IMR-90 (cell line): ENCODE measurements at regions of chr2 and their contacts with region 1.

Region 1: DNA sequence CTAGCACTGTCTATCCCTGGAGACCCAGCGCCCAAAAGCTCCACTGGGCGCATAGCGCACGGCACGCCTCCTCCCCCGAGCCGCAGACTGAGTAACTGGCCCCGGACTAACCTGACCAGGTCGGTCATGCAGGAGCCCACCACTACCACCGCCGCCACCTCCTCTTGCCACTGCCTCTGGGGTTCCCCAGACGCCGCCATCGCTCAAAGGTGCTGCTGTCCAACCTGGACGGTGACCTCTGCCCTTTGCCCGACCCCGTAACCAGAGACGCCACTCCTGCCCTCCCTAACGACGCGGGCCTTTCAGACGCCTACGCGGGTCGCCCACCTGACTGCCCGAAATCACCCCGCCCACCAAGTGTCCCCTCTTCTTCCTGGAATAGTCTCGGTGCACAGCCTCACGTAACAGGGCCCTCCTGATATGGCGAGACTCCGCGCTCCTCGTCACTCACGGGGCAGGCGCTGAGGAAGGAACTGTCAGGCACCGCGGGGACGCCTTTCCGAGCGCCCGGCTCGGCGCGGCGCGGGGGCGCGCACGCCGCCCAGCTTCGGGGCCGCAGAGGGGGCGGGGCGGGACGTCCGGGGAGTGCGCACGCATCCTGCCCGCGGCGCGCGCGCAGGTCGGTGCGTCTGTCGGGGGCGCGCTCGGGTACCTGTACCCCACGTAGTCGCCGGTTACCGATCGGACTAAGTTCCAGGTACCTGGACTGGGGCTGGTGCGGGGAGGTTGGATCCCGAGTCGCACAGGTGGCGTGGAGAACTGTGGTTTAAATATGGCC is at the starts of genes BABAM2 and RBKS:
- DNase-seq: peak; percentile 78
- ATAC-seq: peak; percentile 93
- H3K4me3 ChIP-seq: peak within 1 kb of the TSS; percentile 85
- H3K27ac ChIP-seq: peak within 1 kb of the TSS; percentile 98
- H3K4me1 ChIP-seq: peaks cover 3% of the 10 kb centered on the region; the same call in 1 of the 2 replicates
- H3K27me3 ChIP-seq: no peaks in the 10 kb centered on the region
- CTCF ChIP-seq: no peak
- POLR2A ChIP-seq: peak; percentile 59; the same call in 1 of the 2 replicates
- RAD21 ChIP-seq: peak; percentile 34
- total RNA-seq, gene BABAM2: 16.7 and 23.1 TPM in 2 replicates
- total RNA-seq, gene RBKS: 0.83 and 1.1 TPM in 2 replicates

Region 2: GRCh38 chr2:27271631-27272340 is 618.5 kb before region 1 on chr2:
- CTCF ChIA-PET with region 1: no interaction called
- POLR2A ChIA-PET with region 1: no interaction called
- dilution Hi-C with region 1: no loop called
- in situ Hi-C with region 1: no loop called
- intact Hi-C with region 1: no loop called
- DNase-seq: no peak
- ATAC-seq: no peak
- H3K4me3 ChIP-seq: no peak overlapping the region
- H3K27ac ChIP-seq: no peak overlapping the region
- H3K4me1 ChIP-seq: no peaks in the 10 kb centered on the region
- H3K27me3 ChIP-seq: peaks cover 48% of the 10 kb centered on the region
- CTCF ChIP-seq: no peak
- POLR2A ChIP-seq: no peak
- RAD21 ChIP-seq: no peak

Region 3: DNA sequence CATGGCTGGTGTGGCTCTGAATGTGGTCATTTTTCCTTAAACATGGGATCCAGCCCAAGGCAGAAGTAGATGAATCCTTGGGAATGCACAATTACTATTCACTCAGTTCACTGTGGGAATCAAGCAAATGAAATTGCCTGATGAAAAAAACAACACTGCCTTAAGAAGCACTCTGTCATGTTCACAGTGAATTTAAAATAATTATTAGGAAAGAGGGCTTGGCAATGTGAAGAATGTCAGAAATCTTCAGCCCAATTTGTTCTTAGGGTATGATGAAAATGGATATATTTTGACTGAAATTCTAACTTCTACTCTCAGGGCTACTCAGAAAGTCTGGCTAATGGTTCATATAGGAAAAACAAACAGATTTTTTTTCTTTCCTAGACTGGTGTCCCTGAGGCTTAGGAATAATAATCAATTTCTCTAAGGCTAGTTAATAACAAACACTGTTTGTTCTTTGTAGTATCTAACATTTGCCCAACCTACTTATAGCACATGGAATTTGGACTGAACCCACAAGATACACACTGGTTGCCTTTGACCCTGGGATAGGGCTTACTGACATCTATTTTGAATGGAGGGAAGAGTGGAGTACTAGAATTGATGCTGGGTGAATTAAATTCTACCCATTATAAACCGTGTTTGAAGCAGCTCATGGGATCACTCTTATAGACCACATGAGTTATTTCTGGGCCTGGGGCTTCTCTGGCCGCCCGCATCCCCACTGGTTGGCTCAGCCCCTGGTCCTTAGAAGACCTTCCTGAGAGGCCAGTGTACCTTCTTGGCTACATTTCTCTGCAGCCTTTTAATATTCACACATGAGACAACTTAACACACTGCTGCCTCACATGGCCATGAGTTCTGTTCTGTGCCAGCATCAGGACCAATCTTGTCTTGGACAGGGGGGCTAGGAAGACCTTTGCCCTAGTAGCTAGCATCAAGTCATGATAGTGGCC is 127.1 kb before region 1 on chr2:
- CTCF ChIA-PET with region 1: no interaction called
- POLR2A ChIA-PET with region 1: no interaction called
- dilution Hi-C with region 1: no loop called
- in situ Hi-C with region 1: no loop called
- intact Hi-C with region 1: loop called (anchors 5 kb)
- DNase-seq: peak; percentile 43
- ATAC-seq: peak; percentile 38
- H3K4me3 ChIP-seq: no peak overlapping the region
- H3K27ac ChIP-seq: no peak overlapping the region
- H3K4me1 ChIP-seq: peaks cover 19% of the 10 kb centered on the region
- H3K27me3 ChIP-seq: no peaks in the 10 kb centered on the region
- CTCF ChIP-seq: no peak
- POLR2A ChIP-seq: no peak
- RAD21 ChIP-seq: no peak

Region 4: GRCh38 chr2:27781496-27781895 is 108.8 kb before region 1 on chr2:
- CTCF ChIA-PET with region 1: no interaction called
- POLR2A ChIA-PET with region 1: no interaction called
- dilution Hi-C with region 1: no loop called
- in situ Hi-C with region 1: no loop called
- intact Hi-C with region 1: no loop called
- DNase-seq: no peak
- ATAC-seq: no peak
- H3K4me3 ChIP-seq: no peak overlapping the region
- H3K27ac ChIP-seq: no peak overlapping the region
- H3K4me1 ChIP-seq: no peaks in the 10 kb centered on the region
- H3K27me3 ChIP-seq: no peaks in the 10 kb centered on the region
- CTCF ChIP-seq: no peak
- POLR2A ChIP-seq: no peak
- RAD21 ChIP-seq: no peak

Region 5: GRCh38 chr2:27798948-27799645 is 91.2 kb before region 1 on chr2:
- CTCF ChIA-PET with region 1: no interaction called
- POLR2A ChIA-PET with region 1: no interaction called
- dilution Hi-C with region 1: no loop called
- in situ Hi-C with region 1: no loop called
- intact Hi-C with region 1: loop called (anchors 5 kb)
- DNase-seq: peak; percentile 100
- ATAC-seq: peak; percentile 90
- H3K4me3 ChIP-seq: no peak overlapping the region
- H3K27ac ChIP-seq: peak overlapping the region; percentile 96
- H3K4me1 ChIP-seq: peaks cover 48% of the 10 kb centered on the region
- H3K27me3 ChIP-seq: no peaks in the 10 kb centered on the region
- CTCF ChIP-seq: no peak
- POLR2A ChIP-seq: no peak
- RAD21 ChIP-seq: peak; percentile 26; the same call in 1 of the 2 replicates

Region 6: DNA sequence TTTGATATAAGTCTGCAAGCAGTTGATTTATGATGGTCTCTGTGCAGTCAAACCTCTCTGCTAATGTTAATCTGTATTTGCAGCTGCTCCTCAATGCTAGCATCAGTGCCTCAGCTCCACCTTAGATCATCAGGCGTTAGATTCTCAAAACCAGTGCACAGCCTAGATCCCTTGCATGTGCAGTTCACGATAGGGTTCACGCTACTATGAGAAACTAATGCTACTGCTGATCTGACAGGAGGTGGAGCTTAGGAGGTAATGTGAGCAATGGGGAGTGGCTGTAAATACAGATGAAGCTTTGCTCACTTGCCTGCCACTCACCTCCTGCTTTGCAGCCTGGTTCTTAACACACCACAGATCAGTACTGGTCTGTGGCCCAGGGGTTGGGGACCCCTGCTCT is 18.5 kb before region 1 on chr2:
- CTCF ChIA-PET with region 1: no interaction called
- POLR2A ChIA-PET with region 1: no interaction called
- dilution Hi-C with region 1: no loop called
- in situ Hi-C with region 1: no loop called
- intact Hi-C with region 1: loop called (anchors 2 kb)
- DNase-seq: no peak
- ATAC-seq: no peak
- H3K4me3 ChIP-seq: no peak overlapping the region
- H3K27ac ChIP-seq: no peak overlapping the region
- H3K4me1 ChIP-seq: no peaks in the 10 kb centered on the region
- H3K27me3 ChIP-seq: no peaks in the 10 kb centered on the region
- CTCF ChIP-seq: no peak
- POLR2A ChIP-seq: no peak
- RAD21 ChIP-seq: no peak